Mucosa of descending colon (tissue), 3 donors: ENCODE measurements at regions of chr15 and their contacts with region 1.

Region 1: DNA sequence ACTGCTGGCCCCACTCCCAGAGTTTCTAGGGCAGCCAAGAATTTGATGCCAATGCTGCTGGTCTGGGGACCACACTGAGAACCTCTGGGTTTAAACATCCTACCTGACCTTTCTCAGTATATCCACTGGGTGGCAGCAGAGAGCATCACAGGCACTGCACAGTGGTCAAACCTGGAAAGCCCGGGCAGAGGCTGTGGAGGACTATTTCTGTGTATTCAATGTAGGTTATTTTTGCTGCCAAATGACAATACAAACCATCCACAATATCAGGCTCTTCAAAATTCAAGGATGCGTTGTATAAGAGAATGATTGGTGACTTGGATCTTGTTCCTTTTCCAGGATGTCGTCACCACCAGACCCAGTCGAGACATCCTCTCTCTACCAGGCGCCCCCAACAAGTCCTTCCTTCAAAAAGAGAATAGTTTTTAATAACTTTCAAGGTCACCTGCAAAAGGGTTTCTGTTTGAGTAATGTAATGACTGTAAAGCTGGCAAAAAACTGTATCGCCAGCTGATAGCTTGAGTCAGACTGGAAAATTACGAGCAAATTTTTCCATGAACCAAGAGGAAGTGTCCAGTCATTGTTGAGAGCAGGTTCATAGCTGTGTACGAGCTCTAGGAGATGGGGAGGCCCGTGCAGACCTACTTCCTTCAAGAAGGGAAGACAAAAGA is 30.5 kb upstream of the MYZAP start:
- DNase-seq: peak in 2 of 3 donors; percentile 59 to 77
- ATAC-seq: peak; percentile 88
- H3K4me3 ChIP-seq: no peak overlapping the region
- H3K4me1 ChIP-seq: peaks cover 8% of the 10 kb centered on the region
- CTCF ChIP-seq: peak; percentile 75

Region 2: GRCh38 chr15:57611938-57612337 is 50.8 kb after region 1 on chr15:
- intact Hi-C with region 1: loop called in 1 of 2 experiments (anchors 2 kb)
- DNase-seq: peak in 2 of 3 donors; percentile 64 to 78
- ATAC-seq: peak; percentile 45
- H3K4me3 ChIP-seq: no peak overlapping the region
- H3K4me1 ChIP-seq: peaks cover 31% of the 10 kb centered on the region
- CTCF ChIP-seq: no peak

Region 3: GRCh38 chr15:57706405-57707209 is 145.4 kb after region 1 on chr15 and contains the start of gene POLR2M:
- intact Hi-C with region 1: loop called in 1 of 2 experiments (anchors 5 kb)
- DNase-seq: peak; percentile 94 to 98 (median 95)
- ATAC-seq: peak; percentile 98
- H3K4me3 ChIP-seq: peak within 1 kb of the TSS; percentile 96
- H3K4me1 ChIP-seq: peaks cover 11% of the 10 kb centered on the region
- CTCF ChIP-seq: no peak
- total RNA-seq, gene POLR2M: 40.4 to 82.8 (median 53.3) TPM